Dendritic cell treated with granulocyte-macrophage colony-stimulating factor and Interleukin-4, amounts not matched to agents 40 ng/mL and 50 ng/mL, for 4 days (primary cell): ENCODE measurements at regions of chr3 and their contacts with region 1.

Region 1: DNA sequence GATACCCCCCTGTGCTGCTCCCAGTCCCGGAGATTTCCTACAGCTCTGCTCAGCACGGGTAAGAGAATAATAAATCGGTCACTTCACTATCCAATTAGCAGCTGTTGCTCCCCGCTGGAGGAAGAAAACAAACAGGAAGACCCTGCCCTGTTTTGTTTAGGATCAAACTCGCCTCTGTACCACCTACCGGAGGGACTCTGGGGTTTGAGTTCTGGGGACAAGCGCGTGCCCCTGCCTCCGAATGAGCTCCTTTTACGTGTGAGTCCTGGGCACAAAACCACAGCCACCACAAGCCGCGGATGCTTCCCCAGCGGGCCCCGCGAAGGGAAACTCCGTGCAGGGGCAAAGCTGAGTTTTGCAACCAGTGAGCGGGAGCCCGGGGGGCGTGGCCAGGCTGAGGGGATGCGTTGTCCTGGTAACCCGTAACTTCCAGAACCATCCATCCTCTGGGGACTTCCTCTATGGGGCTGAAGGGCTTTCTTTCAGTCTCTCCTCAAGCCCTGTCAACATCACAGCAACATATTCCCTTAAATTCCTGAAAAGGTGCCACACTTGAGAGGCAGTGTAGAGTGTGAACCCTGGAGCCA is 315.7 kb upstream of the PROK2 start:
- H3K4me3 Mint-ChIP-seq: peak overlapping the region; percentile 75
- H3K27ac Mint-ChIP-seq: peak overlapping the region; percentile 93
- H3K4me1 Mint-ChIP-seq: peaks cover 71% of the 10 kb centered on the region
- H3K27me3 Mint-ChIP-seq: peaks cover 36% of the 10 kb centered on the region

Region 2: GRCh38 chr3:71430941-71431552 is 669.6 kb before region 1 on chr3:
- intact Hi-C with region 1: no loop called
- H3K4me3 Mint-ChIP-seq: no peak overlapping the region
- H3K27ac Mint-ChIP-seq: no peak overlapping the region
- H3K4me1 Mint-ChIP-seq: peaks cover 44% of the 10 kb centered on the region
- H3K27me3 Mint-ChIP-seq: no peaks in the 10 kb centered on the region

Region 3: DNA sequence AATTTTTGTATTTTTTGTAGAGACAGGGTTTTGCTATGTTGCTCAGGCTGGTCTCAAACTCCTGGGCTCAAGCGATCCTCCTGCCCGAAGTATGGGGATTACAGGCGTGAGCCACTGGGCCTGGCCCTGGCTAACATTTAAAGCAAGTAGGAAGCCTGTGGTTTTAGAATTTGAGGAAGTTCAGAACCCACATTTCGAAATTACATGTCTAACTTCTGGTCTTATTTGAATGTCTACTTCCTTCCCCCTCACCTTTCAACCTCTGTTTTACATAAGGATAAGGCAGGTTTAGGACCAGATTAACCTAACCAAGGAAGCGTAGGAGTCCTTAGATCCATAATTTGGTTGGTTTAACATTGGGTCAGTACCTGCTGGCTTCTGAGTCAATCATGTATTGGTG is 195.3 kb before region 1 on chr3:
- intact Hi-C with region 1: loop called (anchors 5 kb)
- H3K4me3 Mint-ChIP-seq: no peak overlapping the region
- H3K27ac Mint-ChIP-seq: no peak overlapping the region
- H3K4me1 Mint-ChIP-seq: peaks cover 66% of the 10 kb centered on the region
- H3K27me3 Mint-ChIP-seq: peaks cover 97% of the 10 kb centered on the region

Region 4: DNA sequence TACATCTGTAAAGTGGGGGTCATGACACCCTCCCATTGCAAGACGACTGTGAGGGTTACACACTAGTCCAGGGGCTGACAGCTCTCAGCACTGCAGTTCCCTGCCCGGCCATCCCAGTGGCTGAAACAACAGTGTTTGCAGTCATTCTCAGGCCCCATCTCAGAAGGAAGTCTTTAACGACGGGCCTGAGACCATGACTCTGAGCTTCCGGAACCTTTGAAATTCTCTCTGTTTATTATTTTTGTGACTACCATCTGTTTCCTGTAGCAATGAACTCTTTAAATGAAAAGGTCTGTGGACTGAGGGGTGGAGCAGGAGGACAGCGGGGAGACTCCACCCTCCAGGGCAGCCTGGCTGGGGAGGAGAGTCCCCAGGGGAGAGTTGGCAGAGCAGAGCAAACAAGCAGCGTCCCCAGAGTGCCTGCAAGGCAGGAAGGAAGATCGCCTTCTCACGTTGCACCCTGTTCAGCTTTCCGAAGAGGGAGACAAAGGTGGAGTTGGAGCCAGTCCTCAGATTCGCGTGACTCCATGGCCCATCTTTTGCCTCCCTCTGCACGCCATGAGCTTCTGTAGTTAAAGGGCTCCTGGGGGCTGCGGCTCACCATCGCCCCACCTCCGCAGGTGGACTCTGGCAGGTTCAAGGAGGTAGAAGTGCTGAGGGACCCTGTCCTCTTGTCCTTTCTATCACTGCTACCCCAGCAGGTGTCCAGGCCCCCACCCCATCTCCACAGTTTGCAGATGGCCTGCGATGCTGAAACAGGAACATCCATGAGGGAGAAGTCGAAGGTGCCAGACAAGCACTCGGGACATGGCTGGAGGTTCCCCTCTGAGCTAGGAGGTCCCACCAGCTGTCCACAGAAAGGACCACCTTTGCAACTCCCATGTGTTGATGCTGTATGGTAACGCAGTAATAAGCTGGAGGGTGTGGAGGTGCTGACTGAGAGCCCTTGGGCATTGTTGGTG is 210.0 kb after region 1 on chr3:
- intact Hi-C with region 1: no loop called
- H3K4me3 Mint-ChIP-seq: peak overlapping the region; percentile 42
- H3K27ac Mint-ChIP-seq: peak overlapping the region; percentile 78
- H3K4me1 Mint-ChIP-seq: peaks cover 29% of the 10 kb centered on the region
- H3K27me3 Mint-ChIP-seq: peaks cover 19% of the 10 kb centered on the region